Heart right ventricle (tissue), 16 donors: ENCODE measurements at regions of chr2 and their contacts with region 1.

Region 1: DNA sequence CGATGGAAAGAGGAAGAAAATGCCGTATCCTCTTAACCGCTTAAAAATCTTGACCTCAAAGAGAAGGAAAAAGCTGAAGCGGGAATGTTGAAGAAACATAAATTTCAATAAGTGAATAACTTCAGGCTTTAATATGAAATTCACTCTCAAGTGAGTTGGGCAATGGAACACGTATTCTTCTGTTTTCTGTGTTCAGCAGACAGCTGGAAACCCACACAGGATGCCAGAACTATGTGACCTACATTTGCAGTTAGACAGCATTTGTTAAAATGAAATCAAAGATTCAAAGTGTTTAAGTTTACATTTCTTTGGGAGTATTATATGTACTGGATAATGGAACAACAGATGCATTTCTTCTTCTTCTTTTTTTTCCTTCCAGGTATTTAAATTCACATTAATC is 80.5 kb upstream of the SPATS2L start:
- DNase-seq: no peak
- ATAC-seq: peak in 6 of 8 donors; percentile 46 to 75 (median 68)
- H3K4me3 ChIP-seq: no peak overlapping the region
- H3K27ac ChIP-seq: peak overlapping the region in 3 of 10 donors; percentile 16 to 44 (median 35)
- H3K4me1 ChIP-seq: peaks cover 4 to 37% (median 15%) of the 10 kb centered on the region in 9 donors
- H3K27me3 ChIP-seq: no peaks in the 10 kb centered on the region
- CTCF ChIP-seq: no peak

Region 2: GRCh38 chr2:200300648-200301314 is 74.8 kb after region 1 on chr2:
- intact Hi-C with region 1: loop called in 1 of 10 experiments (anchors 2 kb)
- DNase-seq: no peak
- ATAC-seq: peak in 6 of 8 donors; percentile 45 to 87 (median 65)
- H3K4me3 ChIP-seq: no peak overlapping the region
- H3K27ac ChIP-seq: no peak overlapping the region
- H3K4me1 ChIP-seq: peaks cover 0 to 22% (median 6%) of the 10 kb centered on the region in 9 donors
- H3K27me3 ChIP-seq: no peaks in the 10 kb centered on the region
- CTCF ChIP-seq: no peak

Region 3: DNA sequence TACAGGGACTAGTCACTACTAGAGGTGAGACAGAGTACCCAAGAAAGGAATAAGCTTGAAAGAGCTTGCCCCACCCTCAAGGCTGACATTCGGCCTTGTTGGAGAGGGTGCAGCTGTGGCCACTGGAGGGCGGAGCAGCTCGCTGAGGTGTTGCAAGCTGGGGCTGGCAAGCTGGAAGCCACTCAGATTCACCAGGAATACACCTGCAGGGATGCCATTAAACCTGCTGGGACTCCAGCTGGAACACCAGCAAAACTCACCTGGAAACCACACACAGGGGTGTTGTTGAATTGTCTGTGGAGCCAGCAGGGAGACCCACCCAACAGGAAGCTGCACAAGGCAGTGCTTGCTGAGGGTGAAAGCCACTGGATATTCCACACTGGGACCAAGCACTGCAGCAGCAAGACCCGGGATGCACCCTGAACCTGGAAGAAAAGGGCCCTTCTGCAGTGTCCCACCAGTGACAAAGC is 257.8 kb after region 1 on chr2:
- intact Hi-C with region 1: loop called in 1 of 10 experiments (anchors 5 kb)
- DNase-seq: no peak
- ATAC-seq: peak in 2 of 8 donors; percentile 29 to 36
- H3K4me3 ChIP-seq: no peak overlapping the region
- H3K27ac ChIP-seq: no peak overlapping the region
- H3K4me1 ChIP-seq: peaks cover 0 to 5% (median 0%) of the 10 kb centered on the region in 9 donors
- H3K27me3 ChIP-seq: no peaks in the 10 kb centered on the region
- CTCF ChIP-seq: peak in 7 of 9 donors; percentile 12 to 47 (median 28)

Region 4: GRCh38 chr2:200929334-200930249 is 703.6 kb after region 1 on chr2:
- intact Hi-C with region 1: no loop called
- DNase-seq: no peak
- ATAC-seq: no peak
- H3K4me3 ChIP-seq: no peak overlapping the region
- H3K27ac ChIP-seq: no peak overlapping the region
- H3K4me1 ChIP-seq: no peaks in the 10 kb centered on the region
- H3K27me3 ChIP-seq: no peaks in the 10 kb centered on the region
- CTCF ChIP-seq: no peak